HEK293 (cell line): ENCODE measurements at regions of chr5 and their contacts with region 1.

Region 1: DNA sequence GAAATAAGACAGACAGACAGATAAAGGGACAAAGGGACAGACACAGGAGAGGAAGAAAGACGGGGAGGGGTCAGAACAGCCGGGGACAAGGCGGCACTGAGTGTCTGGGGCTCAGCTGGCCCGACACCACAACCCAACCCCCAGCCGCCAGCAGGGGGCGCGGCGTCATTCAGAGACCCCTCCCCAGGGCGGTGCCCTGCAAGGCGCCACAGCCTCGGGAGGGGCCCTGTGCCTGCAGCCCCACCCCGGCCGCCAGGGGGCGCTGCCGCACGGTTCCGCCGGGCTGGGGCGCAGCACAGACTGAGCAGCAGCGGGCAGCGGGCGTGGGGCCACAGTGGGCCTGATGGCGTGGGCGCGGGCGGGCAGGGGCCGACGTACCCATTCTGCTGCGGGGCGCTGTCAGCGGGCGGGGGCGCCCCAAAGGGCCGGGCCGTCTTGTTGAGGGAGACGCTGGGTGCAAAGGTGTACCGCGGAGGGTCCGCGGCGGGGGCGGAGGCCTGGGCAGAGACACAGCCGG is 5.9 kb downstream of the PDLIM7 start:
- H3K4me3 ChIP-seq: no peak overlapping the region
- H3K27ac ChIP-seq: no peak overlapping the region
- H3K4me1 ChIP-seq: peaks cover 20% of the 10 kb centered on the region
- CTCF ChIP-seq: peak; percentile 45; the same call in 1 of the 2 replicates

Region 2: GRCh38 chr5:177478711-177479646 is 12.5 kb before region 1 on chr5:
- CTCF ChIA-PET with region 1: interaction called, 11 read pairs
- POLR2A ChIA-PET with region 1: interaction called, 106 read pairs
- H3K4me3 ChIP-seq: no peak overlapping the region
- H3K27ac ChIP-seq: no peak overlapping the region
- H3K4me1 ChIP-seq: no peaks in the 10 kb centered on the region; the same call in 1 of the 2 replicates
- CTCF ChIP-seq: no peak